K562 (cell line): ENCODE measurements at regions of chr11 and their contacts with region 1.

Region 1: GRCh38 chr11:62245271-62245753 is 3.3 kb downstream of the SCGB1D2 start:
- DNase-seq: peak; percentile 38 to 51 (median 48)
- ATAC-seq: peak; percentile 93
- H3K4me3 ChIP-seq: no peak overlapping the region
- H3K27ac ChIP-seq: no peak overlapping the region
- H3K4me1 ChIP-seq: no peaks in the 10 kb centered on the region
- H3K27me3 ChIP-seq: peaks cover 0 to 7% of the 10 kb centered on the region in 2 experiments; a peak in 2 of 5 replicates
- CTCF ChIP-seq: peak; percentile 64 to 73 (median 66)
- EP300 ChIP-seq: no peak
- POLR2A ChIP-seq: no peak
- RAD21 ChIP-seq: peak; percentile 19 to 61; a peak in 2 of 4 replicates

Region 2: GRCh38 chr11:62315431-62315830 is 70.1 kb after region 1 on chr11:
- CTCF ChIA-PET with region 1: no interaction called
- POLR2A ChIA-PET with region 1: no interaction called
- in situ Hi-C with region 1: no loop called
- intact Hi-C with region 1: loop called (anchors 1 kb)
- DNase-seq: no peak
- ATAC-seq: no peak
- H3K4me3 ChIP-seq: no peak overlapping the region
- H3K27ac ChIP-seq: no peak overlapping the region
- H3K4me1 ChIP-seq: peaks cover 0 to 4% of the 10 kb centered on the region in 2 experiments; a peak in 2 of 5 replicates
- H3K27me3 ChIP-seq: peaks cover 31 to 33% of the 10 kb centered on the region in 2 experiments
- CTCF ChIP-seq: no peak
- EP300 ChIP-seq: no peak
- POLR2A ChIP-seq: no peak
- RAD21 ChIP-seq: no peak

Region 3: DNA sequence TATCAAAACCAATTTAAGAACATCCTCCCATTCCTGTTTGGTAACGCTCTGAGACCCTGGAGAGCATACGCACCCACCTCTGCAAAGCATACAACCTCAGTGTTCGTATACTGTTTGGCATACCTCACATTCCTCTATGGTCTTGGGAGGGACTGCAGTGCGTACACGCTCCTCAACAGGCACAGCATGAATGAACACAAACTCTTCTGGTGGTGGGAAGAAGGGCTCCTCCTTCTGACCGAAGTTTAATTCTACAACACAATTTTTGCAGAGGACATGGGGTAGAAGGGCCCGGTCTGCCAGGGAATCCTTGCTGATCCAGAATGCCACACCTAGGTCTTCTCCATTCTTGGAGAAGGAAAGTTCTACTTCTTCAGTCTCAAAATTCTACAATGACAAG is 476.7 kb after region 1 on chr11:
- CTCF ChIA-PET with region 1: no interaction called
- POLR2A ChIA-PET with region 1: no interaction called
- in situ Hi-C with region 1: no loop called
- intact Hi-C with region 1: no loop called
- DNase-seq: peak in 1 of 4 experiments; percentile 24
- ATAC-seq: no peak; the same call in 2 of the 3 replicates
- H3K4me3 ChIP-seq: no peak overlapping the region
- H3K27ac ChIP-seq: no peak overlapping the region
- H3K4me1 ChIP-seq: peaks cover 8 to 9% of the 10 kb centered on the region in 2 experiments; a peak in 4 of 5 replicates
- H3K27me3 ChIP-seq: no peaks in the 10 kb centered on the region
- CTCF ChIP-seq: peak in 2 of 3 experiments; percentile 24 to 25; a peak in 1 of 6 replicates
- EP300 ChIP-seq: no peak
- POLR2A ChIP-seq: no peak
- RAD21 ChIP-seq: no peak